WTC11 (cell line): ENCODE measurements at regions of chr1 and their contacts with region 1.

Region 1: GRCh38 chr1:110312188-110313121 is 26.7 kb upstream of the RBM15 start:
- DNase-seq: peak; percentile 80
- ATAC-seq: peak; percentile 96
- H3K4me3 Mint-ChIP-seq: peak overlapping the region; percentile 54
- H3K27ac Mint-ChIP-seq: no peak overlapping the region; the same call in 1 of the 2 replicates
- H3K4me1 Mint-ChIP-seq: peaks cover 24% of the 10 kb centered on the region
- H3K27me3 Mint-ChIP-seq: no peaks in the 10 kb centered on the region
- CTCF ChIP-seq: peak; percentile 77

Region 2: GRCh38 chr1:110203021-110203661 is 109.3 kb before region 1 on chr1:
- CTCF ChIA-PET with region 1: interaction called, 759 read pairs
- POLR2A ChIA-PET with region 1: interaction called, 12 read pairs
- DNase-seq: peak; percentile 62
- ATAC-seq: peak; percentile 56
- H3K4me3 Mint-ChIP-seq: no peak overlapping the region
- H3K27ac Mint-ChIP-seq: no peak overlapping the region
- H3K4me1 Mint-ChIP-seq: peaks cover 4% of the 10 kb centered on the region
- H3K27me3 Mint-ChIP-seq: no peaks in the 10 kb centered on the region
- CTCF ChIP-seq: peak; percentile 74

Region 3: GRCh38 chr1:110224240-110224995 is 88.0 kb before region 1 on chr1:
- CTCF ChIA-PET with region 1: interaction called, 15 read pairs
- POLR2A ChIA-PET with region 1: no interaction called
- DNase-seq: no peak
- ATAC-seq: no peak
- H3K4me3 Mint-ChIP-seq: no peak overlapping the region
- H3K27ac Mint-ChIP-seq: peak overlapping the region; percentile 72; the same call in 1 of the 2 replicates
- H3K4me1 Mint-ChIP-seq: peaks cover 14% of the 10 kb centered on the region
- H3K27me3 Mint-ChIP-seq: no peaks in the 10 kb centered on the region
- CTCF ChIP-seq: no peak

Region 4: GRCh38 chr1:110243574-110243973 is 68.9 kb before region 1 on chr1:
- CTCF ChIA-PET with region 1: interaction called, 31 read pairs
- POLR2A ChIA-PET with region 1: interaction called, 5 read pairs
- DNase-seq: peak; percentile 31
- ATAC-seq: peak; percentile 73
- H3K4me3 Mint-ChIP-seq: no peak overlapping the region
- H3K27ac Mint-ChIP-seq: no peak overlapping the region
- H3K4me1 Mint-ChIP-seq: peaks cover 39% of the 10 kb centered on the region
- H3K27me3 Mint-ChIP-seq: peaks cover 16% of the 10 kb centered on the region; the same call in 1 of the 2 replicates
- CTCF ChIP-seq: no peak

Region 5: DNA sequence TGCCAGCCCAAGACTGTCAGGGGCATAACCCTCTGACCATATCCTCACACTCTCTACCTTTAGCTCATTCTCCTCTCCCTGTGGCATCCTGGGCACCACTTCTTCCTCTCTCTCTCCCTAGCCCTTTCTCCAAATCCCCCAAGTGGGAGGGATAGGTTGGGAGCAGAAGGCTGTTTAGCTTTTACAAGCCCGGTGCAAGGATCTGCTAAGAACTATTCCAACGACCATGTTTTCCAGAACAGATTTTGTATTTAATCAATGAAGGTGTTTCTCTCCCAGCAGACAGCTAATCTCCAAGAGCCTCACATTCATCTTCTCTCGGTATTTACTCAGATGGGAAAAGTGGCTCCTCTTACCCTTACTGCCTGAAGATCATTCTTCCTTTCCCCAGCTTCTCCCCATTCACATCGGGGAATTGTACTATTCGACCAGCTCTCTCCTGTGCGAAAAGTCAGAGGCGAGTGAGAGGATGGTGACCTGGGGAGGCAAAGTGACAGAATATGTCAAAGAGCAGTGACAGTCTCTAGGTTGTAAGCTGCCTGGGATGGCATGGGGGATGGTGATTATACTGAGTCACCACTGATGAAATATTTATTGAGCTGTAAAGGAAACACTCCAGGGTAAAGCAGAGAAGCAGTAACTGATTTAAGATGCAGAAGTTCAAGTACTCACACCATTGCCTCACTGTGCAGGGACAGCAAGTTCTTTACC is 20.3 kb before region 1 on chr1:
- CTCF ChIA-PET with region 1: interaction called, 34 read pairs
- POLR2A ChIA-PET with region 1: no interaction called
- DNase-seq: no peak
- ATAC-seq: no peak
- H3K4me3 Mint-ChIP-seq: no peak overlapping the region
- H3K27ac Mint-ChIP-seq: no peak overlapping the region
- H3K4me1 Mint-ChIP-seq: peaks cover 12% of the 10 kb centered on the region
- H3K27me3 Mint-ChIP-seq: no peaks in the 10 kb centered on the region; the same call in 1 of the 2 replicates
- CTCF ChIP-seq: no peak

Region 6: GRCh38 chr1:110328274-110328673 is 15.8 kb after region 1 on chr1:
- CTCF ChIA-PET with region 1: interaction called, 12 read pairs
- POLR2A ChIA-PET with region 1: no interaction called
- DNase-seq: no peak
- ATAC-seq: no peak
- H3K4me3 Mint-ChIP-seq: no peak overlapping the region
- H3K27ac Mint-ChIP-seq: no peak overlapping the region
- H3K4me1 Mint-ChIP-seq: peaks cover 4% of the 10 kb centered on the region; the same call in 1 of the 2 replicates
- H3K27me3 Mint-ChIP-seq: no peaks in the 10 kb centered on the region
- CTCF ChIP-seq: no peak

Region 7: DNA sequence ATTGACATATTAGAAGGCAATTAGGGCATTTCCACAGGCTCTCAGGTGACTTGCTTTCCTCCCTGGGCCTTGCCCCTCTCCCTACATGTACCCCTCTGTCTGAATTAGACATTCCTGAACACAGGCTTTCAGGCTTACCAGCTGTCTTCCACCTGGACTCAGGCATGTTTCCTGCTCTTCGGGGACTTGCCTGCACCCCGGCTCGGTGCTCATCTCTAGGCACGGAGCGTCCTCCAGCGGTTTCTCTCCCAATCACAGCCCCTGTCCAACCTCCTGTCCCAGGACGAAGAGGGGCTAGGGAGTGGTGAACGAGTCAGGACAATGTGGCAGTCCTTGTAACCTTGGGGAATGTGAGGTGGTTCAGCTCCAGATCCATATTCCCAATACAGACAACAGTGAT is 142.7 kb after region 1 on chr1:
- CTCF ChIA-PET with region 1: interaction called, 53 read pairs
- POLR2A ChIA-PET with region 1: no interaction called
- DNase-seq: peak; percentile 74
- ATAC-seq: peak; percentile 90
- H3K4me3 Mint-ChIP-seq: no peak overlapping the region
- H3K27ac Mint-ChIP-seq: peak overlapping the region; percentile 63; the same call in 1 of the 2 replicates
- H3K4me1 Mint-ChIP-seq: peaks cover 15% of the 10 kb centered on the region
- H3K27me3 Mint-ChIP-seq: no peaks in the 10 kb centered on the region; the same call in 1 of the 2 replicates
- CTCF ChIP-seq: no peak